ENCODE measurements at regions of chr15 and their contacts with region 1.

Region 1: GRCh38 chr15:85730001-85730820 is 64.5 kb downstream of the KLHL25 start:
- DNase-seq: peak in 2 of 7 donors; percentile 64 to 65
- H3K4me3 ChIP-seq: no peak overlapping the region
- H3K27ac ChIP-seq: peak overlapping the region in 1 of 5 donors; percentile 43
- H3K4me1 ChIP-seq: peaks cover 0 to 2% of the 10 kb centered on the region in 2 donors
- H3K27me3 ChIP-seq: no peaks in the 10 kb centered on the region
- CTCF ChIP-seq: peak; percentile 60 to 86 (median 76)
- POLR2A ChIP-seq: no peak

Region 2: GRCh38 chr15:85689729-85690128 is 40.5 kb before region 1 on chr15:
- intact Hi-C with region 1: no loop called
- DNase-seq: peak in 4 of 7 donors; percentile 32 to 66 (median 44)
- H3K4me3 ChIP-seq: peak overlapping the region in 2 of 4 donors; percentile 5 to 28
- H3K27ac ChIP-seq: peak overlapping the region in 4 of 5 donors; percentile 9 to 68 (median 32)
- H3K4me1 ChIP-seq: peaks cover 8 to 58% of the 10 kb centered on the region in 2 donors
- H3K27me3 ChIP-seq: no peaks in the 10 kb centered on the region
- CTCF ChIP-seq: no peak
- POLR2A ChIP-seq: peak in 1 of 2 donors; percentile 15

Region 3: GRCh38 chr15:85785887-85786780 is 55.9 kb after region 1 on chr15:
- intact Hi-C with region 1: loop called in 1 of 2 experiments (anchors 10 kb)
- DNase-seq: peak; percentile 61 to 79 (median 74)
- H3K4me3 ChIP-seq: no peak overlapping the region
- H3K27ac ChIP-seq: peak overlapping the region in 3 of 5 donors; percentile 51 to 62 (median 59)
- H3K4me1 ChIP-seq: peaks cover 18 to 24% of the 10 kb centered on the region in 2 donors
- H3K27me3 ChIP-seq: no peaks in the 10 kb centered on the region
- CTCF ChIP-seq: no peak
- POLR2A ChIP-seq: no peak

Region 4: DNA sequence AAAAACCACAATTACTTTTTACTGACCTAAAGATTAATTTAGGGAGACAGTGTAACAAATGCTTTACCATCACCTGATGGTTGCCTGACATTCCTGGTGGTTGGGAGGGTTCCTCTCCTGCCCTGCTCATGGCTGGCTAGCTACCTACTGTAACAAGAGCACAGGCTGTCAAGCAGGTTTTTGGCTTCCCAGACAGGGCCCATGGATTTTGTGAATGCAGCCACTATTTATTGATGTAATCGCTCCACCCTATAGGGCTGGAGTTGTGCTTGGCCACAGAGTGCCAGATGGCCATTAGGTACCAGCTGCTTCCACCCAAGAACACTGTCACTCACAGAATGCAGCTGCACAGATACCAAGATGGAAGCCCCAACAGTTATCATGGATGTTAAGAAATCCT is 95.5 kb after region 1 on chr15:
- intact Hi-C with region 1: loop called (anchors 5 kb)
- DNase-seq: no peak
- H3K4me3 ChIP-seq: no peak overlapping the region
- H3K27ac ChIP-seq: no peak overlapping the region
- H3K4me1 ChIP-seq: no peaks in the 10 kb centered on the region
- H3K27me3 ChIP-seq: no peaks in the 10 kb centered on the region
- CTCF ChIP-seq: no peak
- POLR2A ChIP-seq: no peak

Region 5: DNA sequence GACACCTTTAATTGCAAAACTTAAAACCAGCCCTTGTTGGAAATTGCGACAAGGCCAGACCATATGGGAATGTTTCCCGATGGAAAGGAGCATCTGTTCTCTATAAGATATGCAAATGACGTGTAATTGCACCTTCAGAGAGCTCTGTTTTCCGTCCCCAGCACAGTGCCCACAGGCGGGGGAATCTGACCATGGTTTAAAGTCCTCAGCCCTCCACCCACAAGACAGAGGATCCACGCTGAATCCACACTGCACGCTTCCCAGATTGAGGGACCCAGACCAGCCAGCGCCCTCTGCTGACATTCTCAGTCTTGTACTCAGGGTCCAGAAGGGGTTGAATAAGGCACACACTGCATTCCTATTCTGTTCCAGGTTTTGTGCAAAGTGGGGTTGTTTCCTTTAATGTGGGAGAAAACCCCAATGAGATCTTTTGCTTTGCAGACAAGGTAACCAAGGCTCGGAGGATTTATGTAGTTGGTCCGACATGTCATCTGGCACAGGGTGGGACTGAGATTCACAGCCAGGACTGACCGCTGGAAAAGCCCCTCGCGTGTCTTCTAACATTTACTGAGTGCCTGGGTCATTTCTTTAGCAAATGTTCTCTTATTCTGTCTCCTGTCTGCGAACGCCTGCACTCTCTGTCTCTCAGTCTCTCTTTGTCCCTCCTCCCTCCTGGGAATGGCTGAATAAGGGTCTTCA is 101.4 kb after region 1 on chr15:
- intact Hi-C with region 1: loop called (anchors 5 kb)
- DNase-seq: peak; percentile 41 to 85 (median 74)
- H3K4me3 ChIP-seq: no peak overlapping the region
- H3K27ac ChIP-seq: no peak overlapping the region
- H3K4me1 ChIP-seq: no peaks in the 10 kb centered on the region
- H3K27me3 ChIP-seq: no peaks in the 10 kb centered on the region
- CTCF ChIP-seq: peak; percentile 42 to 78 (median 58)
- POLR2A ChIP-seq: no peak

Region 6: GRCh38 chr15:85837011-85837433 is 106.8 kb after region 1 on chr15:
- intact Hi-C with region 1: loop called (anchors 5 kb)
- DNase-seq: peak in 1 of 7 donors; percentile 51
- H3K4me3 ChIP-seq: no peak overlapping the region
- H3K27ac ChIP-seq: no peak overlapping the region
- H3K4me1 ChIP-seq: peaks cover 0 to 10% of the 10 kb centered on the region in 2 donors
- H3K27me3 ChIP-seq: no peaks in the 10 kb centered on the region
- CTCF ChIP-seq: no peak
- POLR2A ChIP-seq: no peak

Measured in adrenal gland (tissue), 19 donors.